ENCODE measurements at regions of chr6 and their contacts with region 1.

Region 1: GRCh38 chr6:71349395-71349794 is 60.8 kb downstream of the OGFRL1 start:
- DNase-seq: peak; percentile 57
- ATAC-seq: peak; percentile 47
- H3K4me3 ChIP-seq: no peak overlapping the region
- H3K4me3 Mint-ChIP-seq: no peak overlapping the region
- H3K27ac ChIP-seq: no peak overlapping the region
- H3K27ac Mint-ChIP-seq: no peak overlapping the region
- H3K4me1 ChIP-seq: peaks cover 5 to 9% of the 10 kb centered on the region in 2 donors
- H3K4me1 Mint-ChIP-seq: peaks cover 10% of the 10 kb centered on the region
- H3K27me3 ChIP-seq: no peaks in the 10 kb centered on the region
- H3K27me3 Mint-ChIP-seq: peaks cover 1% of the 10 kb centered on the region
- CTCF ChIP-seq: peak; percentile 94

Region 2: DNA sequence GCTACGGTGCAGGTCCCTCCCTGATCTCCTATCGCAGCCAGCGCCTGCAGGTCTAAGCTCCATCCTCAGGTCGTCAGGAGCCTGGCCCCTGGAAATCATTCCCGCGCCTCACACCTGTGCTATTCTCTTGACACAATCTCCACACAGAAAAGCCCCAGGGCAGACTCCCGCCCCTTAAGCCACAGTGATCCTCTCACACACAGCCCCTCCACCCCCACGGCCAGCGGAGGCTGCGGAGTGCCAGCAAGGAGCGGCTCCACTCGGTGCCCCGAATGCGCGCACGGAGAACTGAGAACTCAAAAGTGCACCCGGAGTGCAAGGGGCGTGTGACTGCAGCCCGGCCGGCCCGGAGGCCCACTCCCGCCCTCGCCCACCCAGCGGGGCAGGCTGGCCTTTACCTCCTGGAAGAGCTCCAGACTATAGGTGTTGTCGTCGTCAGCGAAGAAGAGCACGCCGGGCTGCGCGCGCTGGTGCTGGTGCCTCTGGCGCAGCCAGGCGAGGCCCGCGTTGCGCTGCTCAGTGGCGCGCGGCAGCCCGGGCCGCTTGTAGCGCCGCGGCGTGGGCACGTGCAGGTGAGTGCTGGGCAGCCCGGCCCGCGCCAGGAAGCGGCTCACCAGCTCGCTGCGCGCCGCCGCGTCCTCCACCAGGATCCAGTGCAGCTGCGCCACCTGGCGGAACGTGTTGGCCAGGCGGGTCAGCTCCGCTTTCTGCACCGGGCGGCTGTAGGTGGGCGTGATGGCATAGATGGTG is 393.8 kb before region 1 on chr6:
- CTCF ChIA-PET with region 1: no interaction called
- POLR2A ChIA-PET with region 1: no interaction called
- intact Hi-C with region 1: loop called (anchors 10 kb)
- DNase-seq: peak; percentile 85
- ATAC-seq: peak; percentile 95
- H3K4me3 ChIP-seq: peak overlapping the region in 4 of 5 experiments; percentile 36 to 66 (median 50)
- H3K4me3 Mint-ChIP-seq: peak overlapping the region; percentile 82
- H3K27ac ChIP-seq: no peak overlapping the region
- H3K27ac Mint-ChIP-seq: no peak overlapping the region
- H3K4me1 ChIP-seq: peaks cover 22 to 24% of the 10 kb centered on the region in 2 donors
- H3K4me1 Mint-ChIP-seq: peaks cover 26% of the 10 kb centered on the region
- H3K27me3 ChIP-seq: peaks cover 0 to 41% (median 19%) of the 10 kb centered on the region in 4 experiments
- H3K27me3 Mint-ChIP-seq: peaks cover 58% of the 10 kb centered on the region
- CTCF ChIP-seq: peak; percentile 85

Region 3: DNA sequence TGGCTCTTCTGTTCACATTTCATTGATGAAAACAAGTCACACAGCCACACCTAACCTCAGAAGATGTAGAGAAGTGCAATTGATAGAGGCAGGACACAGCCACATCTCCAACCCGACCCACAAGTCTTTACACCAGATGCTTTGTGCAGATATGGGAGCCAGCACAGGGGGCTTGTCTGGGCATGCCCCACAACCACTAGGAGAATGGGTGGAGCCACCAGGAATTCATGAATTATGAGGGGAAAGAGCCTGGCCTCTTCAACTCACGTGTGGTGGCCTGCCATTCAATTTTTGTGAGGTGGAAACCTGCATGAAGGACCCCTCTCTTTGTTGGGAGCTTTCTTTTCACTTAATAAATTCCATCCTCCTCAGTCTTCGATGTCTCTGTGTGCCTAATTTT is 18.4 kb after region 1 on chr6:
- CTCF ChIA-PET with region 1: interaction called, 13 read pairs
- POLR2A ChIA-PET with region 1: no interaction called
- intact Hi-C with region 1: no loop called
- DNase-seq: no peak
- ATAC-seq: no peak
- H3K4me3 ChIP-seq: no peak overlapping the region
- H3K4me3 Mint-ChIP-seq: no peak overlapping the region
- H3K27ac ChIP-seq: no peak overlapping the region
- H3K27ac Mint-ChIP-seq: no peak overlapping the region
- H3K4me1 ChIP-seq: peaks cover 22 to 24% of the 10 kb centered on the region in 2 donors
- H3K4me1 Mint-ChIP-seq: peaks cover 25% of the 10 kb centered on the region
- H3K27me3 ChIP-seq: no peaks in the 10 kb centered on the region
- H3K27me3 Mint-ChIP-seq: peaks cover 7% of the 10 kb centered on the region
- CTCF ChIP-seq: no peak

Measured in B cell (primary cell).